HCT116 (cell line): ENCODE measurements at regions of chr10 and their contacts with region 1.

Region 1: DNA sequence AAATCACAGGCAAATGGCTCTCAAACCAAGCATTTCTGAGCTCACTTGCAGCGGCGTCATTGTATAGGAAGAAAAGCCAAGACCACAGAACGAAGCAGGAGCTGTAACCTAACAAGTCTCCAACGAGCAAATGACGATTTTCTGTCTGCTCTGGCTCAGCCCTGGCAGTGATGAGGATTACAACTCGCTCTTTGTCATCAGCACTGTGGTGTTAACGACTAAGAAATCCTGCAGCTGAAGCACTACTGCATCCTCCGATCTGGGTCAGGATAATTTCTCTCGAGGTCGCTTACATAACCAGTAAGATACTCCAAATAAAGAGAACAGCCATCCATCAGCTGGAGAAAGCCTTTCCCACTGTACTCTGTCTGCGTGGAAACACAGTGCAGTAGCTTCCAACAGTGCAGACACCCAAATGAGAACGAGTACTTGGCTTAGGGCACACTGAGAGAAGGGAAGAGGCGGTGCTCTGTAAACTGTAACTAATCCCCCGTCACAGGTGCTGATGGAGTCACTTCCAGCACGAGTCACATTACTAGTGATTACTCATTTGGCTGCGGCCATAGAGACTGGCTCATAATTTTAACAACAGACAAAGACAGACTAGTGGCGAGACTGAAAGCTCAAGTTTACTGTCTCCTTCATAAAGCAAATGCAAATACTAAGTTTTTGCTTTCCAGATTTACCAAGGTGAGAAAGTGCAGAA is 135.8 kb downstream of the NRBF2 start:
- DNase-seq: peak; percentile 94
- ATAC-seq: peak; percentile 93
- H3K4me3 ChIP-seq: peak overlapping the region; percentile 60 to 65
- H3K27ac ChIP-seq: peak overlapping the region; percentile 72
- H3K4me1 ChIP-seq: peaks cover 28 to 57% of the 10 kb centered on the region in 2 experiments
- H3K27me3 ChIP-seq: no peaks in the 10 kb centered on the region
- CTCF ChIP-seq: peak in 2 of 3 experiments; percentile 25 to 36; a peak in 3 of 6 replicates
- POLR2A ChIP-seq: peak; percentile 90
- RAD21 ChIP-seq: peak; percentile 33

Region 2: GRCh38 chr10:63236113-63236935 is 32.6 kb before region 1 on chr10:
- CTCF ChIA-PET with region 1: no interaction called
- POLR2A ChIA-PET with region 1: interaction called, 10 read pairs
- RAD21 ChIA-PET with region 1: no interaction called
- intact Hi-C with region 1: loop called (anchors 2 kb)
- DNase-seq: peak; percentile 82
- ATAC-seq: peak; percentile 93
- H3K4me3 ChIP-seq: peak overlapping the region in 1 of 2 experiments; percentile 34; a peak in 1 of 4 replicates
- H3K27ac ChIP-seq: peak overlapping the region; percentile 81; the same call in 1 of the 2 replicates
- H3K4me1 ChIP-seq: peaks cover 27 to 36% of the 10 kb centered on the region in 2 experiments
- H3K27me3 ChIP-seq: no peaks in the 10 kb centered on the region
- CTCF ChIP-seq: no peak
- POLR2A ChIP-seq: no peak
- RAD21 ChIP-seq: 0 out of 2 replicates have a peak, but pooled peaks have one; percentile 16

Region 3: GRCh38 chr10:63313066-63313717 is 44.2 kb after region 1 on chr10:
- CTCF ChIA-PET with region 1: no interaction called
- POLR2A ChIA-PET with region 1: no interaction called
- RAD21 ChIA-PET with region 1: no interaction called
- intact Hi-C with region 1: no loop called
- DNase-seq: no peak
- ATAC-seq: no peak
- H3K4me3 ChIP-seq: no peak overlapping the region
- H3K27ac ChIP-seq: no peak overlapping the region
- H3K4me1 ChIP-seq: no peaks in the 10 kb centered on the region
- H3K27me3 ChIP-seq: no peaks in the 10 kb centered on the region
- CTCF ChIP-seq: no peak
- POLR2A ChIP-seq: no peak
- RAD21 ChIP-seq: no peak

Region 4: GRCh38 chr10:63554657-63555056 is 285.7 kb after region 1 on chr10:
- CTCF ChIA-PET with region 1: no interaction called
- POLR2A ChIA-PET with region 1: interaction called, 3 read pairs
- RAD21 ChIA-PET with region 1: no interaction called
- intact Hi-C with region 1: loop called (anchors 2 kb)
- DNase-seq: peak; percentile 26
- ATAC-seq: peak; percentile 48
- H3K4me3 ChIP-seq: peak overlapping the region in 1 of 2 experiments; percentile 40; a peak in 2 of 4 replicates
- H3K27ac ChIP-seq: peak overlapping the region; percentile 84
- H3K4me1 ChIP-seq: peaks cover 41 to 53% of the 10 kb centered on the region in 2 experiments
- H3K27me3 ChIP-seq: no peaks in the 10 kb centered on the region
- CTCF ChIP-seq: no peak
- POLR2A ChIP-seq: no peak
- RAD21 ChIP-seq: no peak